ENCODE measurements at regions of chr6 and their contacts with region 1.

Region 1: DNA sequence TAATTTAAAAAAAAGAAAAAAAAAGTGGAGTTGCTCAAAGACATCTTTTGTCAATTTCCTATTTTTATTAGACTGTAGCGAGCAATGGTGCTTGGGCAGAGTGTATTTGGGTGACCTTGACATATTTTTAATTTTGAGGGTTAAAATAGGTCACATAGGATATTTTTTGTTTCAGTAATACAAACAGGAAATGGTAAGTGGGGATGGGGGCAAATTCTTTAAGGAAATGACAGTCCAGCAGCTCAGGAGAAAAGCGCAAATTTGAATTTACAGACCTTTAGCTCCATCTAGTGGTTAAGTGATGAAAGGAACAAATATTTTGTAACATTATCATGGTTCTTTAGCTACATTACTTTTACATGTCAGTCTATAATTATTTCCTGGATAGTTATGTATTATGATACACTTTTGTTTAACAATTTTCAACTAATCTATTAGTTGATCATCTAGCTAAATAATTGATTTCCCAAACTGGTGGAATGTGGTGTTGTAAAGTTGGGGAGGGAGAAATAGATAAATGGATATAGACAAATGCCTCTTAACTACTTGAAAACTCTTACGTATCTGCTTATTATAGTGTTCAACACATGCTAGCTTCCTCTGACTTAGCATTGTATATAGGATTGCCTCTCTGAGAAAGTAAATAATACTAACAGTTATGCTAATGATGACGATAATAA is 10.0 kb downstream of the CITED2 start:
- DNase-seq: peak; percentile 27
- H3K4me3 ChIP-seq: no peak overlapping the region
- H3K27ac ChIP-seq: no peak overlapping the region
- H3K4me1 ChIP-seq: peaks cover 9% of the 10 kb centered on the region
- H3K27me3 ChIP-seq: no peaks in the 10 kb centered on the region
- CTCF ChIP-seq: peak; percentile 41 to 53

Region 2: DNA sequence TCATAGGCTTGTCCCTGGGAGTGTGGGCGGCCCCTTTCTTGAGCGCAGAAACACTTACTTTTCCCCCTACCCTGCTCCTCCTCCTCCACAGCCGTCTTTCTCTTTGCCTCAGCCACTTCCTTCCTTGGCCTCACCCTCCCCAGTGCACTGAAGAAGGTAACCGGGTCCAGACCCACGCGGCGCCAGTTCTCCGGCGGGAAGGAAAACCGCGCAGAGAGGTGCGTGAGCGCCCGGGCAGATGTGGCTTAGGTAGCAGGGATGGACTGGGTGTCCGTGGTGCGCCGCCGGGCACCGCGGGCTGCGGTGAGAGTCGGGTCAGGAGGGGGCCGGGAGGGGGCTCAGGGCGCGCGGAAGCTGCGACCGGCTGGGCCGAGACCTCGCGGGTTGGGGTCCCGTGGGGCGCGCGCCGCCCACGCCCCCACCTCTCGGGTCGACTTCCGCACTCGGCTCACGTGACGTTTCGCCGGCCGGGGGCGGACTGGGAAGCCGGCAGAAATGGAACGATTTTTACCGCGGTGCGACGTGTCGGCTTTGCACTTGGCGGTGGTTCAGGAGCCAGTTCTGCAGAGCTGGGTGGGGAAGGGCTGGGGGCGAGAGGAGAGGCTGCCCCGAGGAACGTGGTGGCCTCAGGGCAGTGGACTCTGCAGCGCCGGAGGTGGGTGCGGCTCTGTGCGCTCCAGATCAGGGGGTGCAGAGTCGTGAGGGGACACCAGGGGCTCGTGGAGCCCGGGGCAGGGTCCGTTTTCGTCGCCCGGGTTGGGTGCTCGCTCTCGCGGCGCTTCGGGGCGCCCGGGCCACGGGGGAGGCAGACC is 335.6 kb before region 1 on chr6 and contains the start of gene ABRACL:
- CTCF ChIA-PET with region 1: no interaction called
- dilution Hi-C with region 1: no loop called
- in situ Hi-C with region 1: no loop called
- intact Hi-C with region 1: loop called (anchors 5 kb)
- DNase-seq: peak; percentile 77
- H3K4me3 ChIP-seq: peak within 1 kb of the TSS; percentile 81 to 98 (median 81)
- H3K27ac ChIP-seq: peak within 1 kb of the TSS; percentile 83
- H3K4me1 ChIP-seq: peaks cover 12% of the 10 kb centered on the region
- H3K27me3 ChIP-seq: no peaks in the 10 kb centered on the region
- CTCF ChIP-seq: no peak
- total RNA-seq, gene ABRACL: 42.5 to 50.4 TPM

Region 3: DNA sequence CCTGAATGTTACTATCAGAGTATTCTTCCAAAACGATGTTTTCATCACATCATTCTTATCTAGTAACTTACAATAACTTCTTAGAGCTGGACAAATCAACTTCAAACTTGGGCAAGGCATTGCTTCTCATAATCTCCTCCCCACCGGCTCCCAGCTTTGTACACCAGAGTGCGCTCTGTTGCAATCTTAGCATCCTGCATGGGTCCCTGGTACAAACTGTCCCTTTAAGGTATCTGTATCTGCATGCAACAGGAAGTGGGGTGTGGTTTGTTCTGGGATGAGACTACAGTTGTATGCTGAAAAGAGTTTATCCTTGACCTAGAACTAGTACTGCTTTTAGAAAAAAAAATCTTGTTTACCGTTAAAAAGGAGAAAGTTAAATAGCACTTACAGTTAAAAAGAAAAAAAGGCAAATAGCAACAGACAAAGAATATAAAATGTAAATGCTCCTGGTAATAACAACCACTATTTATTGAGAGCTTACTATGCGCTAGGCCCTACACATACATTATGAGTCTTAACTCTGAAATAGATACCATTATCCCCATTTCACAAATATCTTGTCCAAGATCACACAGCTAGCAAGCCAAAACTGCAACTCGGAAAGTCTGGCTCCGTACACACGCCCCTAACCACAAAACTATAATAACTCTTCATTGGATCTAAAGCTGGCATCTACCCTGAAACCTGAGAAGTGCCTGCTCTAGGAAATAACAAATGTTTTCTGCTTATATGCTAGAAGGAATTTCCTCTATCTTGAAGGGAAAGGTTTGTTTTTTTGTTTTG is 239.4 kb before region 1 on chr6:
- CTCF ChIA-PET with region 1: no interaction called
- dilution Hi-C with region 1: no loop called
- in situ Hi-C with region 1: no loop called
- intact Hi-C with region 1: loop called (anchors 1 kb)
- DNase-seq: peak; percentile 72
- H3K4me3 ChIP-seq: no peak overlapping the region
- H3K27ac ChIP-seq: no peak overlapping the region
- H3K4me1 ChIP-seq: peaks cover 17% of the 10 kb centered on the region
- H3K27me3 ChIP-seq: no peaks in the 10 kb centered on the region
- CTCF ChIP-seq: peak; percentile 37 to 55

Region 4: GRCh38 chr6:140078561-140079125 is 714.2 kb after region 1 on chr6:
- CTCF ChIA-PET with region 1: no interaction called
- dilution Hi-C with region 1: no loop called
- in situ Hi-C with region 1: no loop called
- intact Hi-C with region 1: no loop called
- DNase-seq: no peak
- H3K4me3 ChIP-seq: no peak overlapping the region
- H3K27ac ChIP-seq: no peak overlapping the region
- H3K4me1 ChIP-seq: peaks cover 10% of the 10 kb centered on the region
- H3K27me3 ChIP-seq: no peaks in the 10 kb centered on the region
- CTCF ChIP-seq: no peak

Measured in mammary epithelial cell (primary cell).